ENCODE measurements at regions of chr15 and their contacts with region 1.

Region 1: GRCh38 chr15:101320501-101321052 is 25.5 kb upstream of the SNRPA1 start:
- DNase-seq: peak; percentile 22 to 84 (median 52)
- ATAC-seq: peak; percentile 99
- H3K4me3 ChIP-seq: peak overlapping the region; percentile 47
- H3K4me3 Mint-ChIP-seq: peak overlapping the region; percentile 71
- H3K27ac ChIP-seq: peak overlapping the region; percentile 23 to 49
- H3K27ac Mint-ChIP-seq: peak overlapping the region; percentile 84
- H3K4me1 ChIP-seq: peaks cover 12% of the 10 kb centered on the region
- H3K4me1 Mint-ChIP-seq: peaks cover 16% of the 10 kb centered on the region
- H3K27me3 ChIP-seq: peaks cover 0 to 5% of the 10 kb centered on the region in 2 experiments
- H3K27me3 Mint-ChIP-seq: peaks cover 20% of the 10 kb centered on the region
- CTCF ChIP-seq: peak; percentile 41

Region 2: GRCh38 chr15:101333401-101333800 is 12.8 kb after region 1 on chr15:
- CTCF ChIA-PET with region 1: interaction called, 4 read pairs
- POLR2A ChIA-PET with region 1: interaction called, 24 read pairs
- intact Hi-C with region 1: no loop called
- DNase-seq: peak in 1 of 14 experiments; percentile 11
- ATAC-seq: no peak
- H3K4me3 ChIP-seq: no peak overlapping the region
- H3K4me3 Mint-ChIP-seq: no peak overlapping the region
- H3K27ac ChIP-seq: peak overlapping the region; percentile 76 to 84
- H3K27ac Mint-ChIP-seq: peak overlapping the region; percentile 90
- H3K4me1 ChIP-seq: peaks cover 25% of the 10 kb centered on the region
- H3K4me1 Mint-ChIP-seq: peaks cover 14% of the 10 kb centered on the region
- H3K27me3 ChIP-seq: peaks cover 4 to 8% of the 10 kb centered on the region in 2 experiments
- H3K27me3 Mint-ChIP-seq: peaks cover 21% of the 10 kb centered on the region
- CTCF ChIP-seq: no peak

Measured in CD4-positive, alpha-beta T cell (primary cell).